Naive thymus-derived CD4-positive, alpha-beta T cell (primary cell): ENCODE measurements at regions of chr11 and their contacts with region 1.

Region 1: DNA sequence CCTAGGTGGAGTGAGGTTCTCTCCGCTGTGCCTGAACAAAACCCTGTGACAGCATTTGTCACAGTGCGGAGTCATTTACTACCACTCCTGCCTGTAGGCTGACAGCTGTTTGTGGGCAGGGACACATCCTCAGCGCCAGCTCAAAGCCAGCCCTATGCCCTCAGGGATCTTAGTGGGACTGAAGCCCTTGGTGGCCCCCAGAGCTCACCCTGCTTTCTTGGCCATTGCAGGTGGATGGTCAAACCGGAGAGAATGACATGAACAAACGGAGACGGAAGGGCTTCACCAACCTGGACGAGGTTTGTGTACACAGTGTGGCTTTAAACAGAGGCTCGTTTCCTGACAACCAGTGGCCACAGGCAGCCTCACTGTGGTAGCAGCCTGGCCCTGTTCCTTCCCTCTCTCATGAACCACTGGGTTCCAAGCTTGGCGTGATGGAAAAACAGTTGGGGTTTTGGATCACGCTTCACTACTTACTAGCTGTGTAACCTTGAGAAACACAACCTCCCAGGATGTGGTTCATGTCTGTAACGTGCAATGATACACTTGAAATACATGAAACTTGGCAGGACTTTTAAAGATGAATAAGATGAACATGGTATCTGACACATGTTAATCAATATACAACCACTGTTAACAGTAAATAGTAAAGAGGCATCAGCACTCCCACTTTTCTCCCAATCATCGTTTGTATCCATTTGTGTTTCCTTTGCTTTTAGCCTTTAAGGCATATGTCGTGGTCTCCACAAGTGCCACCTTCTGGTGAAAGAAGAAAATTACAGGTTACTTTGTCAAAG is 125.8 kb downstream of the MICAL2 start:
- DNase-seq: peak in 8 of 9 donors; percentile 33 to 78 (median 72)
- ATAC-seq: peak; percentile 79
- H3K4me3 ChIP-seq: no peak overlapping the region
- H3K4me3 Mint-ChIP-seq: peak overlapping the region; percentile 17 to 81 (median 68)
- H3K27ac ChIP-seq: no peak overlapping the region
- H3K27ac Mint-ChIP-seq: peak overlapping the region; percentile 27 to 95 (median 77)
- H3K4me1 ChIP-seq: peaks cover 9 to 10% of the 10 kb centered on the region in 2 donors
- H3K4me1 Mint-ChIP-seq: peaks cover 18 to 41% (median 23%) of the 10 kb centered on the region in 7 donors
- H3K27me3 ChIP-seq: no peaks in the 10 kb centered on the region
- H3K27me3 Mint-ChIP-seq: no peaks in the 10 kb centered on the region

Region 2: DNA sequence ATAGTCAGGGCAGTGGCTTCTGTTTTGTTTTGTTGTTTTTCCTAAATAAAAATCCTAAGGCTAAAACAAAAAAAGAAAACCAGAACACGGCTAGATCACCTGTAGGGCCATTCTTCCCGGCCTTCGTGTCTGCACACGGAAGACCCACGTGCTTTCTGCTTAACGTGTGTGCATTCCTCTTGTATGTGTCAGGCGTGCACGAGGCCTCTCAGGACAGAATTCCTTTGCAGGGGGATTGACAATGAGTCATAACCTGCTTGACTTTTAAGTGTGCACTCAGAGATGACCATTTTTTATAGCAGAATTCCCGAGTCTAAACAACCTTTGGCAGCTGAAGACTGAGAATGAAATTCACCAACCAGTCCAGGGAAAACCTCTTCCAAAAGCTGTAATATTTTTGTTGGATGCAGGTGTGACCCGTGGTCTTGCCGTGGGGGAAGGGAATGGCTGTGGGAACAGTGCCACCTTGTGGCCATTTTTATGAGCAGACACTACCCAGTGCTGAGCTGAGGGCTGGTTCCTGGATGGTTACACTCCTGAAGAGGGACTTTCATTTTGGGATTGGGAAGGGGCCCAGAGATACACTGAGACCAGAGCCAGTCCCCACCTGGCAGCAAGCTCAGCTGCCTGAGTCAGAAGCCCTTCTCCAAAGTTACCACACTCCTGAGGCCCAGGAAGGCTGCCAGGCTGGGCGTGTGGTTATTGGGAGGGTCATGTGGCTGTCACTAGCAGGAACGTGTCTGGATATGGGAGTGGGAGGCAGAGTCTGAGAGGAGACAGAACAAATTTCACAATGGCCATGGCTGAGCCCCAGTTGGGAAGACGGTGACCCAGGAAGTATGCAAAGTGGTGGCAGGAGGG is 192.0 kb before region 1 on chr11:
- CTCF ChIA-PET with region 1: interaction called, 67 read pairs
- POLR2A ChIA-PET with region 1: no interaction called
- intact Hi-C with region 1: loop called (anchors 1 kb)
- DNase-seq: peak; percentile 17 to 64 (median 44)
- ATAC-seq: peak; percentile 74
- H3K4me3 ChIP-seq: no peak overlapping the region
- H3K4me3 Mint-ChIP-seq: no peak overlapping the region
- H3K27ac ChIP-seq: no peak overlapping the region
- H3K27ac Mint-ChIP-seq: peak overlapping the region in 1 of 9 donors; percentile 58
- H3K4me1 ChIP-seq: peaks cover 0 to 3% of the 10 kb centered on the region in 2 donors
- H3K4me1 Mint-ChIP-seq: peaks cover 0 to 9% (median 0%) of the 10 kb centered on the region in 7 donors
- H3K27me3 ChIP-seq: no peaks in the 10 kb centered on the region
- H3K27me3 Mint-ChIP-seq: peaks cover 0 to 7% (median 0%) of the 10 kb centered on the region in 5 donors

Region 3: DNA sequence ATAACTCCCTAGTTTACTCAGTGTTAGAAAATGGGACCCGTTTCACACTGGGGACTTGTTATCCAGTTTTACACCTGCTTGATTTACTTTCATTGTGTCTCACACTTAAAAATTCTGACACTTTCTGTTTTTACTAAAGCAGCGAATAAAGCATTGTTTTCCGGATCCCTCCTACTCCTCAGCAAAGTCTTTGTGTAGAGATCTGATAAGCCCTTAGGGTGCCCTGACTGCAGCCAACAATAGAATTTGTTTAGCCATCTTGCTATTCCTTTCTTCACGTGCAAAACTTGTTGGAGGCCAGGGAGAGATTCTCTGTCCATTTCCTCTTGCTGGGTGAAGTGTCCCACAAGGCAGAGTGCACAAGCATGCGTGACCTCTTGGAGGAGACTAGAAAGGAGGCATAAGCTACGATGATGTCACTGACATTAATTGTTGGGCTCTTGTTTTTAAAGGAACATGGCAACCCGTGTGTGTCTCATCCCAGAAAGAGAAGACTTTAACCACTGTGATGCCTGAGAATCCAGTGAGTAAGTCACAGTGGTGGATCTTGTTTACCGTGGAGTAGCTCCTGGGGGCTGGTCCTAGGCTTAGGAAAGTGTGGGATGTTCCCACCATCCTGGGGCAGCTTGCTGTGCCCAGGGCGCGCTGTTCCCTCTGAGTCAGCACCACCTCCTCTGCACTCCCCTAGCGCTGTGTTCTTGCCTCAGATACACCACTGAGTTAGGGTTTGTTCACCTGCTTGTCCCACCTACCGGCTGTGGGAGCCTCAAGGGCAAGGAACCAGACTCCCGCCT is 98.0 kb before region 1 on chr11:
- CTCF ChIA-PET with region 1: interaction called, 4 read pairs
- POLR2A ChIA-PET with region 1: no interaction called
- intact Hi-C with region 1: loop called in 1 of 2 experiments (anchors 1 kb)
- DNase-seq: no peak
- ATAC-seq: no peak
- H3K4me3 ChIP-seq: no peak overlapping the region
- H3K4me3 Mint-ChIP-seq: peak overlapping the region in 2 of 10 donors; percentile 11 to 42
- H3K27ac ChIP-seq: no peak overlapping the region
- H3K27ac Mint-ChIP-seq: peak overlapping the region in 3 of 9 donors; percentile 36 to 82 (median 63)
- H3K4me1 ChIP-seq: peaks cover 2 to 38% of the 10 kb centered on the region in 2 donors
- H3K4me1 Mint-ChIP-seq: peaks cover 40 to 67% (median 58%) of the 10 kb centered on the region in 7 donors
- H3K27me3 ChIP-seq: no peaks in the 10 kb centered on the region
- H3K27me3 Mint-ChIP-seq: no peaks in the 10 kb centered on the region

Region 4: DNA sequence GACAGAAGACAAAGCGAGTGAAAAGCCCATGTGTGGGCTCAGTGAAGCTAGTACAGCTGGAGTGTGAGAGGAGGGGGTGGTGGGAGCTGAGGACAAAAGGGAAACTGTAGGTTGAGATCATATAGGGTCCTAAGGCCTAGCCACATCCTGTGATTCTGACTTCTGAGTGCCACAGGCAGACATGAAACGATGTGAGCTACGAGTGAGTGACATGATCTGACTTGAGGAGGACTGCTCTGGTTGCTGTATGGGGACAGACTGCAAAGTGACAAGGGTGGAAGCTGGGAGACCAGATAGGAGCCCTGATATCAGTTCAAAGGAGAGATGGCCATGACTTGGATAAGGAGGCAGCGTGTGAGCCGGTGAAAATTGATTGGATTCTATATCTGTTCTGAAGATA is 40.4 kb before region 1 on chr11:
- CTCF ChIA-PET with region 1: interaction called, 8 read pairs
- POLR2A ChIA-PET with region 1: interaction called, 3 read pairs
- intact Hi-C with region 1: loop called (anchors 1 kb)
- DNase-seq: peak in 8 of 9 donors; percentile 55 to 77 (median 70)
- ATAC-seq: peak; percentile 83
- H3K4me3 ChIP-seq: peak overlapping the region; percentile 41
- H3K4me3 Mint-ChIP-seq: peak overlapping the region; percentile 68 to 92 (median 81)
- H3K27ac ChIP-seq: peak overlapping the region; percentile 57
- H3K27ac Mint-ChIP-seq: peak overlapping the region; percentile 91 to 97 (median 94)
- H3K4me1 ChIP-seq: peaks cover 40 to 58% of the 10 kb centered on the region in 2 donors
- H3K4me1 Mint-ChIP-seq: peaks cover 50 to 89% (median 75%) of the 10 kb centered on the region in 7 donors
- H3K27me3 ChIP-seq: no peaks in the 10 kb centered on the region
- H3K27me3 Mint-ChIP-seq: no peaks in the 10 kb centered on the region

Region 5: GRCh38 chr11:12281571-12282478 is 45.7 kb after region 1 on chr11:
- CTCF ChIA-PET with region 1: interaction called, 18 read pairs
- POLR2A ChIA-PET with region 1: no interaction called
- intact Hi-C with region 1: loop called in 1 of 2 experiments (anchors 1 kb)
- DNase-seq: peak; percentile 57 to 81 (median 65)
- ATAC-seq: peak; percentile 79
- H3K4me3 ChIP-seq: no peak overlapping the region
- H3K4me3 Mint-ChIP-seq: no peak overlapping the region
- H3K27ac ChIP-seq: no peak overlapping the region
- H3K27ac Mint-ChIP-seq: no peak overlapping the region
- H3K4me1 ChIP-seq: no peaks in the 10 kb centered on the region
- H3K4me1 Mint-ChIP-seq: peaks cover 0 to 3% (median 0%) of the 10 kb centered on the region in 7 donors
- H3K27me3 ChIP-seq: no peaks in the 10 kb centered on the region
- H3K27me3 Mint-ChIP-seq: no peaks in the 10 kb centered on the region